Caco-2 (cell line): ENCODE measurements at regions of chr11 and their contacts with region 1.

Region 1: DNA sequence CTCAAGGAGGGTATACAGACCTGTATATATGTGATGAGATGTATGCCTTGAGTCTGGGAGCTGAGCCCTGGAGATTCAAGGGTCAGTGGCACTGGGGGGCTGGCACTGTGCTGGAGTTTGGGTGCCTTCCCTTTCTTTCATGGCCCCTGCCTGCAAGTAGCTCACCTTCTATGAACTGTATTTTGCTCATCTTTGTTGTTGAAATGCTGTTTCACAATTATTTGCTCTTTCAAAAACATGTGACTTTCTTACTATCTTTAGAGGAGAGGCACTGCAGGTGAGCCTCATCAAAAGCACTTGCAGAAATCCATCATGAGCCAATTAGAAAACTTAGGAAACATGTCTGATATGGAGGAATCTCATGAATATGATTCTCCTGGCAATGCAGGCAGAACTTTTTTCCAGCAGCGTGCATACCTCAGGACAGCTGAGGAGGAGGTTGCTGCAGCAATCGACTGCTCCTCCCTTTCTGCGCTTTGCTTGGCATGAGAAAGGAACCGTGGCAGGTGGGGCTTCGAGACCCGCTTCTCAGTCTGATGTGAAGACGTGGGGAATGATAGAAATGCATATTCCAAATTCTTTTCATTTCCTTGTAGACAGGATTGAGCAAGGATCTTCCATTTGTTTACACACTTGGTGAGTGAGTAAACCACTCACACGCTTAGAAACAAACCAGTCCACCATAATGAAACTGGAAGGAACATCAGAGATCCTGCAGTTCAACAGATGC is 178.4 kb upstream of the E2F8 start:
- DNase-seq: peak; percentile 53 to 60
- H3K4me3 ChIP-seq: no peak overlapping the region
- H3K4me3 Mint-ChIP-seq: peak overlapping the region; percentile 74
- H3K27ac Mint-ChIP-seq: peak overlapping the region; percentile 94
- H3K4me1 ChIP-seq: peaks cover 25% of the 10 kb centered on the region
- H3K4me1 Mint-ChIP-seq: peaks cover 35% of the 10 kb centered on the region
- H3K27me3 ChIP-seq: no peaks in the 10 kb centered on the region
- H3K27me3 Mint-ChIP-seq: no peaks in the 10 kb centered on the region
- CTCF ChIP-seq: no peak

Region 2: DNA sequence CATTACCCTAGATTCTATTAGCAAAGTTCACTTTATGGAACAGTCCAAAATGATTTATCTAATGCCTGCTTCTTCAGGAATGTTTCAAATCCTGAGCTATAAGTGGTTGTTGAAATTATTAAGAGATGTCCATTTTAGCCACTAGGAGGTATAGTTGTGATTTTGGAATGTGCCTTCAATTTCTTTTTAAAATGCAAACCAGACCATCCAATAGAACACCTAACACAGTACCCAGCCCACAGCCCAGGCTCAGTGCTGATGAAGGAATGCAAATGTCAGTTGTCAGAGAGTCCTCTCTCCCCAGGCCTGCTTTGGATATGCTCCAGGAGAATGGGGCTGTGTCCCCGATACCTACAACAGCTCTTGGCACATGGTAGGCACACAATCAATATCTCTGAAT is 92.7 kb before region 1 on chr11:
- CTCF ChIA-PET with region 1: no interaction called
- POLR2A ChIA-PET with region 1: no interaction called
- intact Hi-C with region 1: loop called (anchors 5 kb)
- DNase-seq: no peak
- H3K4me3 ChIP-seq: no peak overlapping the region
- H3K4me3 Mint-ChIP-seq: no peak overlapping the region
- H3K27ac Mint-ChIP-seq: no peak overlapping the region
- H3K4me1 ChIP-seq: no peaks in the 10 kb centered on the region
- H3K4me1 Mint-ChIP-seq: no peaks in the 10 kb centered on the region
- H3K27me3 ChIP-seq: no peaks in the 10 kb centered on the region
- H3K27me3 Mint-ChIP-seq: peaks cover 5% of the 10 kb centered on the region
- CTCF ChIP-seq: peak in 1 of 2 experiments; percentile 24

Region 3: GRCh38 chr11:19344751-19345518 is 74.3 kb before region 1 on chr11:
- CTCF ChIA-PET with region 1: interaction called, 3 read pairs
- POLR2A ChIA-PET with region 1: interaction called, 3 read pairs
- intact Hi-C with region 1: loop called (anchors 5 kb)
- DNase-seq: no peak
- H3K4me3 ChIP-seq: no peak overlapping the region
- H3K4me3 Mint-ChIP-seq: peak overlapping the region; percentile 46
- H3K27ac Mint-ChIP-seq: no peak overlapping the region
- H3K4me1 ChIP-seq: peaks cover 10% of the 10 kb centered on the region
- H3K4me1 Mint-ChIP-seq: peaks cover 7% of the 10 kb centered on the region
- H3K27me3 ChIP-seq: no peaks in the 10 kb centered on the region; the same call in 1 of the 2 replicates
- H3K27me3 Mint-ChIP-seq: peaks cover 7% of the 10 kb centered on the region
- CTCF ChIP-seq: no peak

Region 4: GRCh38 chr11:19405966-19406365 is 13.2 kb before region 1 on chr11:
- CTCF ChIA-PET with region 1: no interaction called
- POLR2A ChIA-PET with region 1: no interaction called
- intact Hi-C with region 1: no loop called
- DNase-seq: no peak
- H3K4me3 ChIP-seq: no peak overlapping the region
- H3K4me3 Mint-ChIP-seq: no peak overlapping the region
- H3K27ac Mint-ChIP-seq: no peak overlapping the region
- H3K4me1 ChIP-seq: no peaks in the 10 kb centered on the region
- H3K4me1 Mint-ChIP-seq: no peaks in the 10 kb centered on the region
- H3K27me3 ChIP-seq: no peaks in the 10 kb centered on the region
- H3K27me3 Mint-ChIP-seq: no peaks in the 10 kb centered on the region
- CTCF ChIP-seq: peak in 1 of 2 experiments; percentile 9

Region 5: DNA sequence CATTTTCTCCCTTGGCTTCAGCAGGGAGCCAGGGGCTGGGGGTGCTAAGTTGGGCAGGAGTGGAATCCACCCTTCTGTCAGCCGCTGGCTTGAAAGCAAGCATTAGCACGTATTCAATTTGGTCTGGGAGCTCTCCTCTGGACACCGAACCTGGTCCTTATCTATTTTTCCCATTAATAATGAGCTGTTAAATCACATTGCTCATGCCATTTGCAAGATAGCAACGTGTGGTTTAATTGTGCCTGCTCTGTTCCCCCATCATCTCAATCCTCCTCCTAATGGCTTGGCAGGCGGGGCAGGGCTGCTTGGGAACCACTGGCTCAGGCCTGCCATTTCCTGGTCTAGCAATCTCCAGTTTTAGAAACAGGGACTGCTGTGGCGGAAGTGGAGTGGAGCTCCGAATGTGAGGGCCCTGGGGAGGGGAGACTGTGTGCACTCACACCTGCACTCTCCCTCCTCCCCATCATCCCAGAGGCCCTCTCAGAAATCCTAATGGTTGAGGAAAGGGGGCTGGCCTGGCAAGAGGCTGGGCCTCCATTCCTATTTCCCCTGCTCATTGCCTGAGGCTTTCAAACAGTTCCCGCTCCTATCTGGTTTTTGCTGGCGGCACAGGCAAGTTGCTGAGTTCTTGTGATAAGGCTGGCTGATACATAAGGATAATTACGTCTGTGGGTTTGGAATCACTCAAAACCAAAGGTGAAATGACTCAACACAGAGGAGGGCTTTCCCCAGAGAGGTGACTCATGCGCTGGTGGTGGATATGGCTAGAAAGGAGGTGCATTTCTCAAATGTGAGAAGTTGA is 22.8 kb after region 1 on chr11:
- CTCF ChIA-PET with region 1: no interaction called
- POLR2A ChIA-PET with region 1: no interaction called
- intact Hi-C with region 1: loop called (anchors 1 kb)
- DNase-seq: peak; percentile 67 to 79
- H3K4me3 ChIP-seq: no peak overlapping the region
- H3K4me3 Mint-ChIP-seq: no peak overlapping the region
- H3K27ac Mint-ChIP-seq: peak overlapping the region; percentile 82
- H3K4me1 ChIP-seq: peaks cover 26% of the 10 kb centered on the region
- H3K4me1 Mint-ChIP-seq: peaks cover 36% of the 10 kb centered on the region
- H3K27me3 ChIP-seq: no peaks in the 10 kb centered on the region
- H3K27me3 Mint-ChIP-seq: no peaks in the 10 kb centered on the region
- CTCF ChIP-seq: no peak